Panc1 (cell line): ENCODE measurements at regions of chr15 and their contacts with region 1.

Region 1: GRCh38 chr15:65318870-65319356 is 14.4 kb downstream of the RNU5B-1 start:
- DNase-seq: no peak
- ATAC-seq: peak; percentile 99
- H3K4me3 ChIP-seq: no peak overlapping the region
- H3K27ac ChIP-seq: no peak overlapping the region
- H3K4me1 ChIP-seq: no peaks in the 10 kb centered on the region
- H3K27me3 ChIP-seq: no peaks in the 10 kb centered on the region
- CTCF ChIP-seq: peak; percentile 92

Region 2: DNA sequence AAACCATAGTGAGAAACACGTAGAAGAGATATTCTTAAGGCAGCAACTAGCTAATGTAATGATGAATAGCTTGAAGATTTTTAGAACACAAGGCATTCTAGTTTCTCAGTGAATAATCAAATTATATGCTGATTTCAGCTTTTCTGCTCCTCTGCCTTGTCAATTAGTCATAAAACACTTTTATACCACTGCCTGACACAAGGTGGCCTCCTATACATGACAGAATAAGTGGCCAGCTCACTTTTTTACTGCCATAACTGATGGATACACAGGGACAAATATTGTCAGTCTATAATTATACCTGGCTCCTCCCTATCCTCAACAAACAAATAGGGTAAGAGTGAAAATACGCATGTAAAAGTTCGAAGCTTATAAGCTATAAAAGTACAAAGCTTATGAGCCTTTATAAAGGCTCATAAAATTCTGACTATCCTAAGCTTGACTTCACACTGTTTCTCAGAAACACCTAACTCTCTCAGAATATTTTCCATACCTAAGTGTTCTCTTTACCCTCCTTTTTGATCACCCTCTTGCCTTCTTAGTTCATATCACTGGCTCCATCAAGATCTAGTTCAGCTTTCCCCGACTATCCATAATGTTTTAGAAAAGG is 1566.7 kb before region 1 on chr15:
- CTCF ChIA-PET with region 1: no interaction called
- POLR2A ChIA-PET with region 1: no interaction called
- in situ Hi-C with region 1: no loop called
- intact Hi-C with region 1: no loop called
- DNase-seq: peak; percentile 51
- ATAC-seq: peak; percentile 84
- H3K4me3 ChIP-seq: no peak overlapping the region
- H3K27ac ChIP-seq: no peak overlapping the region
- H3K4me1 ChIP-seq: no peaks in the 10 kb centered on the region
- H3K27me3 ChIP-seq: no peaks in the 10 kb centered on the region
- CTCF ChIP-seq: peak; percentile 75; the same call in 1 of the 2 replicates

Region 3: DNA sequence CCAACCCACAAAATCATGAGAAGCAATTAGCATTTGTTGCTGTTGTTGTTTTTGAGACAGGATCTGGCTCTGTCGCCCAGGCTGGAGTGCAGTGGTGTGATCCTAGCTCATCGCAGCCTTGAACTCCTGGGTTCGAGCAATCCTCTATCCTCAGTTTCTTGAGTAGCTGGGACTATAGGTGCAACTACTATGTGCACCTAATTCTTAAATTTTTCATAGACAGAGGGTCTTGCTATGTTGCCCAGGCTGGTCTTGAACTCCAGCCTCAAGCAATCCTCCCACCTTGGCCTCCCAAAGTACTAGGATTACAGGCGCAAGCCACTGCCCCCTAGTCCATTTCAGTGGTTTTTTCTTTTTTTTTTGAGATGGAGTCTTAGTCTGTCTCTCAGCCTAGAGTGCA is 50.5 kb before region 1 on chr15:
- CTCF ChIA-PET with region 1: no interaction called
- POLR2A ChIA-PET with region 1: no interaction called
- in situ Hi-C with region 1: no loop called
- intact Hi-C with region 1: no loop called
- DNase-seq: no peak
- ATAC-seq: no peak
- H3K4me3 ChIP-seq: no peak overlapping the region
- H3K27ac ChIP-seq: no peak overlapping the region
- H3K4me1 ChIP-seq: no peaks in the 10 kb centered on the region
- H3K27me3 ChIP-seq: no peaks in the 10 kb centered on the region
- CTCF ChIP-seq: no peak

Region 4: GRCh38 chr15:65377104-65377975 is 58.4 kb after region 1 on chr15:
- CTCF ChIA-PET with region 1: no interaction called
- POLR2A ChIA-PET with region 1: interaction called, 3 read pairs
- in situ Hi-C with region 1: loop called (anchors 10 kb)
- intact Hi-C with region 1: no loop called
- DNase-seq: no peak
- ATAC-seq: peak; percentile 79
- H3K4me3 ChIP-seq: peak overlapping the region; percentile 44 to 46
- H3K27ac ChIP-seq: no peak overlapping the region
- H3K4me1 ChIP-seq: no peaks in the 10 kb centered on the region; the same call in 1 of the 2 replicates
- H3K27me3 ChIP-seq: peaks cover 37% of the 10 kb centered on the region
- CTCF ChIP-seq: no peak

Region 5: DNA sequence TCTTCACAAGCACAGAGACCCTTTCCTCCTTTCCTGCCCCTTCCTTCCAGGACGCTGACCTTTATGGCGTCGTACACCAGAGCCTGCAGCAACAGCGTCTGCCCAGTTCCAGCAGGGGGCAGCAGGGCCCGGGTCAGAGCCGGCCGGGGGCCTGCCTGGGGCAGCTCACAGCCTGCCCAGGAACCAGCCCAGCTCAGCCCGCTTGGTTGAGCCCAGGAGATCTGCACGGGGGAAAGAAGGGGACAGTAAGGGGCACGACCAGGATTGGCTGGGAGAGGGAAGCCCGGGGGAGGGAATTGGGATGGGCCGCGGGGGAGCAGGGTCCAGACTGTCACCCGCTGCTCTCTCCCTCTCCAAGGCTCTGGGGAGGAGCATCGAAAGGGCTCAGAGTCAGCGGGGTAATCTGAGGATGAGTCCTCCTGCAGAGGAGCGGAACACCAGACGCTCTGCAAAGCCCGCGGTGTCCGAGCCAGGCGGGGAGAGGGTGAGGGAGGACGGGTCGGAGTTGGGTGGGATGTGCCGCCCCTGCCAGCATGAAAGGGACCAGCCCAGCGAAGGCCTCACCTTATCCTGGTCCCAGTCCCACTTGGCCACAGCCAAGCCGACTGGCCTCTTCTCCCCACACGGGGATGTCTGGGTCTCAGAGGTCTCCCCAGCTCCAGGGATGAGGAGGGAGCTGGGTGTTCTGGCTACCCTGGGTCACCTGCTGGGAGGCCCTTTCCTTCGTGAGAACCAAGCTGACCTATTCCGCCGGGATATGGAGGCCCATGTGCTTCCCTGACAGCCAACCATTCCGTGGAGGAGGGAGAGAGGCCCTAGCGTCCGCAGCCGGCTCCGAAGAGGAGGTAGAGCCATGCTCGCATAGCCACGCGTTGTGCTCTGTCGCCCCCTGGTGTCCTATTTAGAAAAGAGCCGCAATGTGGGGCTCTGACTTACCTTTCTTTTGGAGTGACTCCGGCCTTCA is 66.3 kb after region 1 on chr15:
- CTCF ChIA-PET with region 1: interaction called, 11 read pairs
- POLR2A ChIA-PET with region 1: interaction called, 3 read pairs
- in situ Hi-C with region 1: no loop called
- intact Hi-C with region 1: loop called (anchors 1 kb)
- DNase-seq: peak; percentile 60
- ATAC-seq: peak; percentile 94
- H3K4me3 ChIP-seq: peak overlapping the region; percentile 8 to 36
- H3K27ac ChIP-seq: no peak overlapping the region
- H3K4me1 ChIP-seq: peaks cover 3% of the 10 kb centered on the region
- H3K27me3 ChIP-seq: peaks cover 8% of the 10 kb centered on the region; the same call in 1 of the 2 replicates
- CTCF ChIP-seq: peak; percentile 91

Region 6: DNA sequence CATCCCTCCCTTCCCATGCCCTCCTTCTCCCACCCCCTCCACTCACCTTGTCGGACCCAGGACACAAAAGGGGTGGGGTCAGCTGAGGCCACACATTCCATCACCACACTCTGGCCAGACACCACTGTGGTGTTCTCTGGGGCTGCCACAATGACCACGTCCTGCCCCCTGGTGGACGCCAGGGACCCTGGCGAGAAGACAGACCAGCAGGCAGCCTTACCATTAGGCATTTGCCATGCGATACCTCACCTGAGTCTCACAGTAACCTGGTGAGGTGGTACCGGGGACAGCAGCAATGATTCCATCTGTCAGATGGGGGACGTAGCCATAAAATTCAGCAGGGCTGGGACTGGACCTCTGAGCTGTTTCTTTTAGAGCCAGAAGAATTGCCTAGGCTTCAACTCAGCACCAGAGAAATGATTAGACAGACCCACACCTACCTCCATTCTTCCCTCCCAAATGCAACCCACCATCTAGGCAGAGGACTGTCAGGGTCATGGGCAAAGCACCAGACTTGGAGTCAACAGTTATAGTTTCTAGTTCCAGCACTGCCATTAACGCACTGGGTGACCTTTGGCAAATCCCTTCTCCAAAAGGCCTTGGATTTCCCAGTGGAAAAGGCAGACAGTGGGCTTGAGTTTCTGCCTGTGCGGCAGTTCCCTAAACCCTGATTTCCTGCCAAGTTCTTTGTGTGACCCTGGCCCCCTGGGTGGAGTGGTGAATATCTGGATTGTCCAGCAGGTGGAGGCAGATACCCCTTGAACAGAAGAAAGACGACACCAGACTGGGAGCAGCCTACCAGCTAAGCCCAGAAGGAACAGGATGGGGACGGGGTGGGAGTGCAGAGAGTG is 82.1 kb after region 1 on chr15:
- CTCF ChIA-PET with region 1: interaction called, 10 read pairs
- POLR2A ChIA-PET with region 1: no interaction called
- in situ Hi-C with region 1: no loop called
- intact Hi-C with region 1: loop called (anchors 5 kb)
- DNase-seq: no peak
- ATAC-seq: peak; percentile 95
- H3K4me3 ChIP-seq: no peak overlapping the region
- H3K27ac ChIP-seq: no peak overlapping the region
- H3K4me1 ChIP-seq: peaks cover 4% of the 10 kb centered on the region; the same call in 1 of the 2 replicates
- H3K27me3 ChIP-seq: no peaks in the 10 kb centered on the region
- CTCF ChIP-seq: peak; percentile 93